ENCODE measurements at regions of chr1 and their contacts with region 1.

Region 1: GRCh38 chr1:39250460-39251240 is 46.2 kb downstream of the MACF1 start:
- DNase-seq: peak in 1 of 42 donors; percentile 31

Region 2: DNA sequence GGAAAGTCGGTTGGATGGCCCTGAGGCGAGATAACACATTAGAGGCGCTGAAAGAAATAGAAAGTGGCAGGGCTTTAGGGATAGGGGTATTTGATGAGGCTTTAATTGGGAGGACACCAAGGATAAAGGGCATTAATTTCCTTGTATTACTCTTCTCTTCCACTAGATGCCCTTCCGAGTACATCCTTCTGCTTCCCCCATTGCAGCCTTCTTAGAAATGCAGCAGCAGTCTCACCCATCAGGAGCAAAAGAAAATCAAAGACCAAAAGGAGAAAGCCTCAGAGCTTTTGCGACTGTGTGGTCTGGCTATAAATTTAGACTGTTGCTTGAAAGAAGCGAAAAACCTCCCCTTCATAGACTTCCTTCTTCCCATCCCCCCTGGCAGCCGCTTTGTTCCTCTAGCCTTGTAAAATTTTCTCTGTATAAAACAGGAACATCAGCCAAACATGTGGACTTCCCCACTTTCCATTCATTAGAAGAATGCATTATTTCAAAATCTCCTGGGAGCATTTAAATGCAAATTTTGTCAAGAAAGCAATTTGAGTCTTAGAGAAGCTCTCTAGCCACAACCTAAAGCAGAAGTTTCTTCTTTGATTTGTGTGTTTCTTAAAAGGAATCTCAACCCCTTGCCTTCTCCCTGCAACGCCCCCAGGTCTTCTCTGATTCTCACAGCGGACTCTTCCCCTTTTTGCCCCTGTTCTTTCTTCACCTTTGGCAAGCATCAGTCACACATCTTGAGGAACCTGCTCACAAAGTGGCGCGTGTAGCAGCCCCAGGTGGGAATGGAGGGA is 147.9 kb before region 1 on chr1:
- intact Hi-C with region 1: loop called (anchors 5 kb)
- DNase-seq: peak in 26 of 42 donors; percentile 24 to 84 (median 58)

Region 3: GRCh38 chr1:39293375-39294070 is 42.9 kb after region 1 on chr1:
- intact Hi-C with region 1: no loop called
- DNase-seq: peak in 15 of 42 donors; percentile 10 to 70 (median 34)

Region 4: DNA sequence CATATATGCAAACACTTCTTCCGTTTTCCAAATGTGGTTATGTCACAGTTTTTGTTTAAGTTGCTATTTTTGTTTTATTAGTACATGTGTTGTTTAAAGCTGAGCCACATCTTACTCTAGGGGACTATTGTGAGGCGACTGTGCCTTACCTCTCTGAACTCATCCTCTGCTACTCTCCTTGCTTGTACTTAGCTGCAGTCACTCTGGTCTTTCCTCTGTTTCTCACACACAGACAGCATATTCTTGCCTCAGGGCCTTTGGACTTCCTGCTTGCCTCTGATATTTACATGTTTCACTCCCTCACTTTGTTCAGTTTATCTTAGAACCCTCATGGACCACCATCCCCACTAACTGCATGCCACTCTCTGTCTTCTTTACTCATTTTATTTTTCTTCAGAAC is 54.9 kb after region 1 on chr1:
- intact Hi-C with region 1: no loop called
- DNase-seq: no peak